A549 (cell line): ENCODE measurements at regions of chr1 and their contacts with region 1.

Region 1: DNA sequence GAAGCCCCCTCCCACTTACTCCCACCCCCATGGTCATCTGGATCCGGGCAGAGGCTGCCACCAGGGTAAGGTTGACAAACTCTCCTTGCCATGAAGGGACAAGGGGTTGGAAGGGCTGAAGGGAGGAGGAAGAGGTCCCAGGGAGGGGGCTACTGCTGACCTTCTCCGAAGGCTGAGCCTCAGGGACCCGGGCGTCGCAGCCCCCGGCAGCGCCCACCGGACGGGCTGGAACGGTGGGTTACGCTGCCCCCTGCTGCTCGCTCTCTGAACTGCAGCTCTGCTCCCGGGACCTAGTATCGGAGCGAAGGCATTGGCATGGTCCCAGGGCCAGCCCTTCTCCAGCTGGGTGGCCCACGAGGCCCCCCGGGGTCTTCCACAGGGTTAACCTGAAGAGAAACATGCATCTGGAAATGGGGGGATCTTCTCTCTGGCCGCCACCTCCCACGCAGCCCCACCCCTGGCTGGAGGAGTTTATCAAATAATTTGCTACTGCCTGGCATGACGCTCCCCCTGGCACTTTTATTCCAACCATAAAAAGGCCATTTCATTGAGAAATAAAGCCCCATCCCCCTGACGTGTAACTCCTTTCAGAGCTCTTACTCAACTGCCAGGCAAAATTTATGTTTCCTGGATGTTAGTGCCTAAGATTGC is 70.4 kb upstream of the TARDBP start:
- DNase-seq: peak in 1 of 2 experiments; percentile 71
- ATAC-seq: peak; percentile 30 to 76; a peak in 3 of 6 replicates
- H3K4me3 ChIP-seq: no peak overlapping the region
- H3K27ac ChIP-seq: no peak overlapping the region
- H3K4me1 ChIP-seq: 0 out of 3 replicates have a peak, but pooled peaks cover 3% of the 10 kb centered on the region
- CTCF ChIP-seq: peak; percentile 72
- EP300 ChIP-seq: no peak
- POLR2A ChIP-seq: no peak
- RAD21 ChIP-seq: peak; percentile 60 to 68

Region 2: GRCh38 chr1:10507111-10507879 is 434.7 kb before region 1 on chr1:
- CTCF ChIA-PET with region 1: interaction called, 12 read pairs
- POLR2A ChIA-PET with region 1: no interaction called
- DNase-seq: peak; percentile 65 to 70
- ATAC-seq: peak; percentile 85 to 87
- H3K4me3 ChIP-seq: no peak overlapping the region
- H3K27ac ChIP-seq: no peak overlapping the region
- H3K4me1 ChIP-seq: peaks cover 40% of the 10 kb centered on the region
- CTCF ChIP-seq: peak; percentile 73
- EP300 ChIP-seq: no peak
- POLR2A ChIP-seq: no peak
- RAD21 ChIP-seq: peak; percentile 79 to 83